ENCODE measurements at regions of chr1 and their contacts with region 1.

Region 1: DNA sequence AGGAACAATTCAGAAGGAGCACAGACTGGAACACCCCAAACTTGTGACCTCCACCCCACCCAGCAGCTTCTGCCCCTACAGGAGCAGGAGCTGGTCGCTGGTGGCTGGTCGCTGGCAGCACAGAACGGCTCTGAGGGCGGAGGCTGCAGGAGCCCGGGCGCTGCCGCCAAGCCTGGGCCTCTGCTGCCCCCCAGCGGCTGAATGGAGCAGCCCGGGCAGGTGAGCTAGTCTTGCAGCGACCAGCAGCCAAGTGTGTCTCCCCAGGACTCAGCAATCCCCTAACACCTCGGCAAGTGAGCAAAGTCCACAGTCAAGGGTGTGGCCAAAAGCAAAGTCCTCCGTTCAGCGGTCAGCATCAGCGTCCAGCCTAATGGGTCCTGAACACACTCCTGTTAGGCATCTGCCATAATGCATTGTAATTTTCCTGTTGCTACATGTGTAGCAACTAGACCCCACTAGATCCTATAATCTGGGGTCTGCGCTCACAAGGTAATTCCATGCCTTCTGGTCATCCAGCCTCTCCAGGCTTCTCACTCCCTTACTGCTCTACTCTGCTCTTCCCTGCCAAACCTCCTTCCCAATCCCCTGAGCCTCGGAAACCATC is 12.1 kb upstream of the GJB5 start:
- DNase-seq: peak; percentile 91
- H3K4me3 ChIP-seq: no peak overlapping the region; a peak in 1 of 4 replicates
- H3K27ac ChIP-seq: no peak overlapping the region
- H3K4me1 ChIP-seq: peaks cover 0 to 8% of the 10 kb centered on the region in 2 experiments; a peak in 1 of 4 replicates
- H3K27me3 ChIP-seq: no peaks in the 10 kb centered on the region
- CTCF ChIP-seq: peak; percentile 82
- EP300 ChIP-seq: no peak
- RAD21 ChIP-seq: peak; percentile 95

Region 2: GRCh38 chr1:33641104-33641830 is 1101.5 kb before region 1 on chr1:
- CTCF ChIA-PET with region 1: interaction called, 11 read pairs
- POLR2A ChIA-PET with region 1: no interaction called
- DNase-seq: no peak
- H3K4me3 ChIP-seq: no peak overlapping the region
- H3K27ac ChIP-seq: no peak overlapping the region
- H3K4me1 ChIP-seq: no peaks in the 10 kb centered on the region
- H3K27me3 ChIP-seq: no peaks in the 10 kb centered on the region
- CTCF ChIP-seq: 0 out of 2 replicates have a peak, but pooled peaks have one; percentile 28
- EP300 ChIP-seq: no peak
- RAD21 ChIP-seq: peak; percentile 41

Region 3: DNA sequence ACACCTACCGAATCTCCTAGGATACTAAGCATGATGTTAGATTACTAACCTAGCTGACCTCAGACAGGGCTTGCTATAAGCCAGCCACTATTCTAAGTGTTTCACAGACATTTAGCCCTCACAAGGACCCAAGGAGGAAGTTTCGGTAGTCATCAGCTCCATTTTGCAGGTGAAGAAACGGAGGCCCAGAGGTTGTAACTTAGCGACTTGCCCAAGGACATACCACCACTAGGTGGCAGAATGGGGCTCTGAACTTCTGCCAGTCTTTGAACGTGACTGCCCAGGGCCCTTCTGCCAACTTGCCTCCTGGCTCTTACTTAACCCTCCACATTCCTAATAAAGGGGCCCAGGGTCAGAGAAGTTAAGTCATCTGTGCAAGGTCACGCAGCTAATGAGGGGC is 282.6 kb before region 1 on chr1:
- CTCF ChIA-PET with region 1: interaction called, 42 read pairs
- POLR2A ChIA-PET with region 1: no interaction called
- DNase-seq: peak; percentile 37
- H3K4me3 ChIP-seq: no peak overlapping the region
- H3K27ac ChIP-seq: no peak overlapping the region
- H3K4me1 ChIP-seq: no peaks in the 10 kb centered on the region
- H3K27me3 ChIP-seq: no peaks in the 10 kb centered on the region
- CTCF ChIP-seq: peak; percentile 23; the same call in 1 of the 2 replicates
- EP300 ChIP-seq: no peak
- RAD21 ChIP-seq: peak; percentile 56

Region 4: GRCh38 chr1:34603594-34603993 is 139.2 kb before region 1 on chr1:
- CTCF ChIA-PET with region 1: interaction called, 17 read pairs
- POLR2A ChIA-PET with region 1: no interaction called
- DNase-seq: no peak
- H3K4me3 ChIP-seq: no peak overlapping the region
- H3K27ac ChIP-seq: no peak overlapping the region
- H3K4me1 ChIP-seq: no peaks in the 10 kb centered on the region
- H3K27me3 ChIP-seq: no peaks in the 10 kb centered on the region
- CTCF ChIP-seq: no peak
- EP300 ChIP-seq: no peak
- RAD21 ChIP-seq: no peak

Region 5: DNA sequence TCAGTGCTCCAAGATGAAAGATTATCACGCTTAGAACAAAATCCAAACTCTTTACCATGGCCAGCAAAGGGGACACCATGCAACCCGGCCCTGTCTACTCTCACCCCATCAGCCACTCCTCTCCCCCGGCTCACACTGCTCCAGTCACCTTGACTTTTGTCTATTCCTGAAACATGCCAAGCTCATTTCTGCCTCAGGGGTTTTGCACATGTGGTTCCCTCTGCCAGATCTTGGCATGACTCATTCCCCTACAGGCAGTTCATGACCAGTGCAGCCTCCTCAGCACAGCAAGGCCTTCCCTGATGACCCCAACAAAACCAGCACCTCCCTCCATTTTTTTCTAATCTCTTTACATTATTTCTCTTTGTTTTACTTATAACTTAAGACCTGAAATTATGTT is 46.6 kb before region 1 on chr1:
- CTCF ChIA-PET with region 1: interaction called, 24 read pairs
- POLR2A ChIA-PET with region 1: no interaction called
- DNase-seq: peak; percentile 54
- H3K4me3 ChIP-seq: no peak overlapping the region
- H3K27ac ChIP-seq: no peak overlapping the region
- H3K4me1 ChIP-seq: peaks cover 0 to 24% of the 10 kb centered on the region in 2 experiments; a peak in 1 of 4 replicates
- H3K27me3 ChIP-seq: no peaks in the 10 kb centered on the region
- CTCF ChIP-seq: no peak
- EP300 ChIP-seq: peak in 1 of 2 experiments; percentile 33; a peak in 1 of 4 replicates
- RAD21 ChIP-seq: no peak; the same call in 1 of the 2 replicates

Region 6: GRCh38 chr1:34726861-34727260 is 15.9 kb before region 1 on chr1:
- CTCF ChIA-PET with region 1: interaction called, 32 read pairs
- POLR2A ChIA-PET with region 1: no interaction called
- DNase-seq: no peak
- H3K4me3 ChIP-seq: no peak overlapping the region
- H3K27ac ChIP-seq: no peak overlapping the region
- H3K4me1 ChIP-seq: peaks cover 0 to 3% of the 10 kb centered on the region in 2 experiments; a peak in 1 of 4 replicates
- H3K27me3 ChIP-seq: no peaks in the 10 kb centered on the region
- CTCF ChIP-seq: no peak
- EP300 ChIP-seq: no peak
- RAD21 ChIP-seq: no peak

Region 7: GRCh38 chr1:34946211-34946610 is 203.4 kb after region 1 on chr1:
- CTCF ChIA-PET with region 1: no interaction called
- POLR2A ChIA-PET with region 1: no interaction called
- DNase-seq: no peak
- H3K4me3 ChIP-seq: no peak overlapping the region
- H3K27ac ChIP-seq: no peak overlapping the region
- H3K4me1 ChIP-seq: no peaks in the 10 kb centered on the region
- H3K27me3 ChIP-seq: no peaks in the 10 kb centered on the region; the same call in 1 of the 2 replicates
- CTCF ChIP-seq: no peak
- EP300 ChIP-seq: no peak
- RAD21 ChIP-seq: no peak